H1 (cell line): ENCODE measurements at regions of chr16 and their contacts with region 1.

Region 1: GRCh38 chr16:85275533-85276249 is 163.4 kb upstream of the CIBAR2 start:
- DNase-seq: peak in 1 of 2 experiments; percentile 96
- H3K4me3 ChIP-seq: no peak overlapping the region
- H3K27ac ChIP-seq: no peak overlapping the region
- H3K4me1 ChIP-seq: peaks cover 0 to 15% (median 4%) of the 10 kb centered on the region in 4 experiments; a peak in 4 of 7 replicates
- H3K27me3 ChIP-seq: peaks cover 0 to under 1% (median 0%) of the 10 kb centered on the region in 4 experiments; a peak in 1 of 7 replicates
- CTCF ChIP-seq: peak; percentile 96 to 99 (median 97)
- EP300 ChIP-seq: no peak
- POLR2A ChIP-seq: no peak
- RAD21 ChIP-seq: peak; percentile 91 to 93

Region 2: DNA sequence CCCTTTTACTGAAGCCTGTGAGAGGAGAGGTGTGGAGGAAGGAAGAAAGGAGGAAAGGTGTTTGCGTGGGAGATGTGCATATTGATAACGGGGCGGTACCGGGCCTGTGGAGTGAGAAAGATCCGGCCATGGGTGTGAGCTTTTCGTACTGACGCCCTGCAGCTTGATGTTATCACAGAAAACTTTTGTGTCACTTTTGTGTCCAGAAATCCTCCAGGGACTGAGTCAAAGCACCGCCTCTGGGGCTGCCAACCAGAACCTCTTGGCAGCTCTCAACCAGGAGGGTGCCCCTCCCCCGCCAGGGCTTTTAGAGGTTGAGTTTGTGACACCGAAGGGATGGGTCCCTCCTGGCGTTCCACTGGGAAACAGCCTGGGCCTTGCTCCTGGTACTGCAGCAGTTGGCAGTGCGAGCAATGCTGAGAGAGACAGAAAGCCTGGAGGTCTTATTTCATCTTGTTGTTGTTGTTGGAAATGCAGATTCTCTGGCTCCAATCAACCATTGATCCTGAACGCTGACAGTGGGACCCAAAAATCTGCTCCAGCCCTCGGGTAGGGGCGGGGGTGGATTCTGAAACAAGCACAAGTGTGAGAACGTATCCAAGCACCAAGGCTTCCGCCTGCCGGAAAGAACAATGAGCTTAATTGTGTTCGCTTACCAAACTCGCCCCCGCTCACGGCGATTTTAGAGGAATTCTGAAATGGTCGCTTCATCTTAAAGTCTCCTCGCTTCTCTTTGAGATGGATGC is 390.9 kb before region 1 on chr16:
- CTCF ChIA-PET with region 1: no interaction called
- POLR2A ChIA-PET with region 1: no interaction called
- DNase-seq: peak in 1 of 2 experiments; percentile 62
- H3K4me3 ChIP-seq: no peak overlapping the region
- H3K27ac ChIP-seq: no peak overlapping the region
- H3K4me1 ChIP-seq: peaks cover 7 to 22% (median 13%) of the 10 kb centered on the region in 4 experiments
- H3K27me3 ChIP-seq: no peaks in the 10 kb centered on the region
- CTCF ChIP-seq: no peak
- EP300 ChIP-seq: no peak
- POLR2A ChIP-seq: no peak
- RAD21 ChIP-seq: no peak

Region 3: GRCh38 chr16:85258629-85259028 is 17.1 kb before region 1 on chr16:
- CTCF ChIA-PET with region 1: interaction called, 66 read pairs
- POLR2A ChIA-PET with region 1: no interaction called
- DNase-seq: no peak
- H3K4me3 ChIP-seq: no peak overlapping the region
- H3K27ac ChIP-seq: no peak overlapping the region
- H3K4me1 ChIP-seq: peaks cover 0 to 8% (median 3%) of the 10 kb centered on the region in 4 experiments; a peak in 5 of 7 replicates
- H3K27me3 ChIP-seq: no peaks in the 10 kb centered on the region
- CTCF ChIP-seq: no peak
- EP300 ChIP-seq: no peak
- POLR2A ChIP-seq: no peak
- RAD21 ChIP-seq: no peak

Region 4: GRCh38 chr16:85296859-85297660 is 21.4 kb after region 1 on chr16:
- CTCF ChIA-PET with region 1: interaction called, 165 read pairs
- POLR2A ChIA-PET with region 1: no interaction called
- DNase-seq: peak in 1 of 2 experiments; percentile 87
- H3K4me3 ChIP-seq: no peak overlapping the region
- H3K27ac ChIP-seq: no peak overlapping the region
- H3K4me1 ChIP-seq: no peaks in the 10 kb centered on the region
- H3K27me3 ChIP-seq: no peaks in the 10 kb centered on the region; a peak in 1 of 7 replicates
- CTCF ChIP-seq: peak; percentile 91 to 93 (median 91)
- EP300 ChIP-seq: no peak
- POLR2A ChIP-seq: no peak
- RAD21 ChIP-seq: peak; percentile 49 to 68; a peak in 3 of 4 replicates

Region 5: DNA sequence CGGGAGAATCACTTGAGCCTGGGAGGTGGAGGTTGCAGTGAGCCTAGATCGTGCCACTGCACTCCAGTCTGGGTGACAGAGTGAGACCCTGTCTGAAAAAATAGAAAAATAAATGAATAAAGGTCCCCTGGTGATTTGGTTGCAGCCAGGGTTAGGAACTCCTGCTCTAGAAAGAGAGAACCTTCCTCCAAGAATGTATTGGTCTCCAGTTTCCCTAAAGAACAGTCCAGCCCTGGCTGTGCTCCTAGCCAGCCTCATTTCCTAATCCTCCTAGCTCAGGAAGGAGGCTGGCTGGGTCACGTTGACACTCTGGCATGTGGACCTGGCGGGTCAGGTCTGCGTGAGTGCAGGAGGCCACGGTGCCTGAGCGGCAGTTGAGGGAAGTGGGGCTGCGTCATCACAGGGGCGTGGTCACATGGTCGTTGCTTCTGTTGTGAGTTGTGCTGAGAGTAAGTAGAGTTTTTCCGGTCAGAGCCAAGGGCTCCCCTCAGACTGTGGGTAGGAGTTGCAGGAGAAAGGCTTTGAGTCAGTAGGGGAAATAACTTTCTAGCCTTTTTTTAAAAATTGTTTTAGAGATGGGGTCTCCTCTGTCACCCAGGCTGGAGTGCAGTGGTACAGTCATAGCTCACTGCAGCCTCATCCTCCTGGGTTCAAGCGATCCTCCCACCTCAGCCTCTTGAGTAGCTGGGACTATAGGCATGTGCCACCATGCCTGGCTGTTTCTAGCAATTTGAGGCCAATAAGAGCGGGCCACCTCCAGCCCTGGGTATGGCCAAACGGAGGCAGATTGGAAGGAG is 30.5 kb after region 1 on chr16:
- CTCF ChIA-PET with region 1: interaction called, 49 read pairs
- POLR2A ChIA-PET with region 1: interaction called, 4 read pairs
- DNase-seq: no peak
- H3K4me3 ChIP-seq: no peak overlapping the region
- H3K27ac ChIP-seq: no peak overlapping the region
- H3K4me1 ChIP-seq: peaks cover 3 to 27% (median 23%) of the 10 kb centered on the region in 4 experiments
- H3K27me3 ChIP-seq: 0 out of 7 replicates have a peak, but pooled peaks cover 0 to 4% (median 0%) of the 10 kb centered on the region in 4 experiments
- CTCF ChIP-seq: no peak
- EP300 ChIP-seq: no peak
- POLR2A ChIP-seq: no peak
- RAD21 ChIP-seq: no peak

Region 6: GRCh38 chr16:85321509-85322271 is 46.0 kb after region 1 on chr16:
- CTCF ChIA-PET with region 1: interaction called, 18 read pairs
- POLR2A ChIA-PET with region 1: no interaction called
- DNase-seq: no peak
- H3K4me3 ChIP-seq: no peak overlapping the region
- H3K27ac ChIP-seq: no peak overlapping the region
- H3K4me1 ChIP-seq: peaks cover 0 to 8% (median 3%) of the 10 kb centered on the region in 4 experiments; a peak in 4 of 7 replicates
- H3K27me3 ChIP-seq: peaks cover 0 to 1% (median 0%) of the 10 kb centered on the region in 4 experiments; a peak in 3 of 7 replicates
- CTCF ChIP-seq: no peak
- EP300 ChIP-seq: no peak
- POLR2A ChIP-seq: no peak
- RAD21 ChIP-seq: no peak

Region 7: GRCh38 chr16:85330694-85331188 is 55.0 kb after region 1 on chr16:
- CTCF ChIA-PET with region 1: interaction called, 12 read pairs
- POLR2A ChIA-PET with region 1: no interaction called
- DNase-seq: no peak
- H3K4me3 ChIP-seq: peak overlapping the region in 2 of 4 experiments; percentile 32 to 36; a peak in 3 of 8 replicates
- H3K27ac ChIP-seq: no peak overlapping the region
- H3K4me1 ChIP-seq: peaks cover 4 to 51% (median 42%) of the 10 kb centered on the region in 4 experiments
- H3K27me3 ChIP-seq: peaks cover 26 to 56% (median 47%) of the 10 kb centered on the region in 4 experiments
- CTCF ChIP-seq: peak in 2 of 3 experiments; percentile 59 to 74; a peak in 3 of 4 replicates
- EP300 ChIP-seq: no peak
- POLR2A ChIP-seq: no peak
- RAD21 ChIP-seq: peak; percentile 24 to 40